ENCODE measurements at regions of chr17 and their contacts with region 1.

Region 1: GRCh38 chr17:41107941-41108450 is 2.8 kb downstream of the KRTAP4-9 start:
- DNase-seq: no peak
- H3K4me3 ChIP-seq: no peak overlapping the region
- H3K27ac ChIP-seq: no peak overlapping the region
- H3K4me1 ChIP-seq: peaks cover 9% of the 10 kb centered on the region
- H3K27me3 ChIP-seq: no peaks in the 10 kb centered on the region
- CTCF ChIP-seq: no peak

Region 2: DNA sequence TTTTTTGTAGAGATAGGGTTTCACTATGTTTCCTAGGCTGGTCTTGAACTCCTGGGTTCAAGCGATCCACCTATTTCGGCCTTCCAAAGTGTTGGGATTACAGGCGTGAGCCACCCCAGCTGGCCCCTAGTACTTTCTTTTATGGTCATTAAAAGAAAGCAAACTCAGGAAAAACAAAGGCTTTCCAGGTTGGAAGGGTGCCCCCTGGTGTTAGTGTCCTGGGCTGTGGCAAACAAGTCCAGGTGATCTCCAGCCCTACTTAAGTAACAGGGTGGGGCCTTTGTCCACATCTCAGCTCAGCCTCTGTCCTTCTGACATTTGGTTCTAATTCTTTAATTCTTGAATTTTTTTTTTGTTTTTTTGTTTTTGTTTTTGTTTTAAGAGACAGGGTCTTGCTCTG is 657.8 kb before region 1 on chr17:
- CTCF ChIA-PET with region 1: no interaction called
- dilution Hi-C with region 1: no loop called
- in situ Hi-C with region 1: no loop called
- intact Hi-C with region 1: no loop called
- DNase-seq: peak; percentile 39
- H3K4me3 ChIP-seq: no peak overlapping the region
- H3K27ac ChIP-seq: no peak overlapping the region
- H3K4me1 ChIP-seq: peaks cover 16% of the 10 kb centered on the region
- H3K27me3 ChIP-seq: no peaks in the 10 kb centered on the region
- CTCF ChIP-seq: peak; percentile 62 to 67

Region 3: GRCh38 chr17:41082626-41083025 is 25.4 kb before region 1 on chr17:
- CTCF ChIA-PET with region 1: interaction called, 3 read pairs
- dilution Hi-C with region 1: no loop called
- in situ Hi-C with region 1: no loop called
- intact Hi-C with region 1: loop called (anchors 1 kb)
- DNase-seq: peak; percentile 58
- H3K4me3 ChIP-seq: no peak overlapping the region
- H3K27ac ChIP-seq: peak overlapping the region; percentile 57
- H3K4me1 ChIP-seq: peaks cover 7% of the 10 kb centered on the region
- H3K27me3 ChIP-seq: no peaks in the 10 kb centered on the region
- CTCF ChIP-seq: no peak

Region 4: DNA sequence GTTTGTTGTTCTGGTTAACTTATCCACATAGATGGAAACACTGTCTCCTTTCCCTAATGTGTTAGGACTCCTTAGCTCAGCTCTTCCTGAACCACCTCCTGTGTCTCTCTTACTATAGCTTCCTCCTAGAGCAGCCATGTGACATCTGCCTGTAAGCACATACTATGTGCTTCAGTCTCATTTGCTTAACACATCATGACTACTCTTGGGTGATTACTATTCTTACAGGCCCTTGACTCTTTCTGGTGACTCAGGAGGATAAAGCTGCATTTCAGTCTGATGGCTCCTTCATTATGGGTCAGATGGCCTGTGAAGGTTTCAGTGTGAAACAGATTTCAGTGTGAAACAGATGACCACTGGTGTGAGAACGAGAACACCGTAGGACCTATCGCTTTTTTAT is 70.3 kb after region 1 on chr17:
- CTCF ChIA-PET with region 1: no interaction called
- dilution Hi-C with region 1: no loop called
- in situ Hi-C with region 1: no loop called
- intact Hi-C with region 1: no loop called
- DNase-seq: peak; percentile 70
- H3K4me3 ChIP-seq: no peak overlapping the region
- H3K27ac ChIP-seq: no peak overlapping the region
- H3K4me1 ChIP-seq: no peaks in the 10 kb centered on the region
- H3K27me3 ChIP-seq: no peaks in the 10 kb centered on the region
- CTCF ChIP-seq: no peak